Common myeloid progenitor, CD34-positive (primary cell): ENCODE measurements at regions of chr5 and their contacts with region 1.

Region 1: GRCh38 chr5:151825445-151825844 is 53.7 kb downstream of the G3BP1 start:
- DNase-seq: peak; percentile 17 to 43 (median 24)
- H3K4me3 ChIP-seq: no peak overlapping the region
- H3K27ac ChIP-seq: no peak overlapping the region
- H3K4me1 ChIP-seq: peaks cover 0 to 6% (median 1%) of the 10 kb centered on the region in 4 experiments
- H3K27me3 ChIP-seq: no peaks in the 10 kb centered on the region

Region 2: DNA sequence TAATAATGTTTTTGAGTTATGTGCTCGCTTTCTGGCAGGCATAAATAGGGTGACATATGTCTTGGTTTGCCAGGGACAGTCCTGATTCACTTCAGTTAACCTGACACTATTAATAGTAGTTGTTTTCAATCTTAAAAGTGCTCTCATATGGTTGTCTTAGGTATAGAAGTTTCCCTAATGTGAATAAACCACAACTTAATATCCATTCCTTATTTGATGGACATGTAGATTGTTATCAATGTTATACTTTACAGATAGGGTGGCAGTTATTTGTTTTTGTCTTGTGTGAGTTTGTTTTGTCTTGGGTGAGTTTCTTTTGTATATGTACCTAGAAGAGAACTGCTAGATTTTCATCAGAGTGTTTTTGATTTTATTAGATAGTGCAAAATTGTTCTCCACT is 45.8 kb before region 1 on chr5:
- CTCF ChIA-PET with region 1: no interaction called
- POLR2A ChIA-PET with region 1: no interaction called
- DNase-seq: no peak
- H3K4me3 ChIP-seq: no peak overlapping the region
- H3K27ac ChIP-seq: no peak overlapping the region
- H3K4me1 ChIP-seq: peaks cover 4 to 28% (median 10%) of the 10 kb centered on the region in 4 experiments
- H3K27me3 ChIP-seq: no peaks in the 10 kb centered on the region

Region 3: GRCh38 chr5:151815051-151815450 is 10.4 kb before region 1 on chr5:
- CTCF ChIA-PET with region 1: interaction called, 12 read pairs
- POLR2A ChIA-PET with region 1: no interaction called
- DNase-seq: no peak
- H3K4me3 ChIP-seq: no peak overlapping the region
- H3K27ac ChIP-seq: no peak overlapping the region
- H3K4me1 ChIP-seq: no peaks in the 10 kb centered on the region
- H3K27me3 ChIP-seq: no peaks in the 10 kb centered on the region

Region 4: GRCh38 chr5:152142840-152143469 is 317.5 kb after region 1 on chr5:
- CTCF ChIA-PET with region 1: interaction called, 37 read pairs
- POLR2A ChIA-PET with region 1: no interaction called
- DNase-seq: peak; percentile 22 to 59 (median 45)
- H3K4me3 ChIP-seq: no peak overlapping the region
- H3K27ac ChIP-seq: no peak overlapping the region
- H3K4me1 ChIP-seq: no peaks in the 10 kb centered on the region
- H3K27me3 ChIP-seq: peaks cover 0 to 3% (median 0%) of the 10 kb centered on the region in 5 experiments